ENCODE measurements at regions of chr10 and their contacts with region 1.

Region 1: DNA sequence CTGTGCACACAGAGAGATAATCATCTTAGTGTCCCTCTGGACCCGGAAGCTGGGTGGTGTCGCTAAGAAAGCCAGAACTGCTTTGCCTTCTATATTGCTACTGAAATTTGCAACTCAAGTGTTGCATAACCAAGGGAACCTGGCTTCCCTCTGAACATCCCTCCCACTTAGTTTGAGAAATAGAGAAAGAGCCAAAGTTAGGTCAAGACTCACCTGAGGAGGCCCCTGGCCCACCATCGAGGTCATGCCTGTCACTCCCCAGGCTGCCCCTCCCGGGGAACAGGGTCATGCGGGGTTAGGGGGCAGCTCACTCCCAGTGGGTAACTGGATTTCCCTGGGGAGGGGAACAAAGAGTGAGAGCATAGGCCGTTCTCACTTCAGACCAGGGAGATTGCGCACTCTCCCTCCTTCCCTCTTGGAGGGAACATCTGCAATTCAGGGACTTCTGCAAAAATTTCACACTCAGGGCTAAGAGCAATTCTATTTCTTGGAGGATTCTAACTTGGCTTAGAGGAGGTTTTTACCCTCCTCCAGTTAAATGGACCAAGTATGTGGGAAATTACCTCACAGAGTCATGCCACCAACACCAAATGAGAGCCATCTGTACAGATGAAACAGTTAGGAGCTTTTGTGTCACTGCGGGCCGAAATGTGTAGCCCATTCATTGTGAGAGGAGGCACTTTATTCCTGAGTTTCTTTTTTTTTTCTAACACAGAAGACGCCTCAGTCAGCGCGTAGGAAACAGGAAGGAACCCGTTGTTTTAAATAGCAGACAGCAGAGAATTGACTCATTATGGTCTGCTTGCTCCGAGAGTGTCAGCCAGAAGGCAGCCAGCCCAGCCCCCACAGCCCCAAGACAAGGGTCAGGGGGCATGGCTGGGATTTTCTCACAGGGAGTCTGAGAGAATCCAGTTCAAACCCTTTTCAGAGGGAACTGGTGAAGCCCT is 221.3 kb downstream of the ARHGAP12 start:
- DNase-seq: peak in 3 of 4 donors; percentile 26 to 70 (median 35)
- ATAC-seq: peak; percentile 56
- H3K4me3 ChIP-seq: no peak overlapping the region
- H3K27ac ChIP-seq: peak overlapping the region in 3 of 4 donors; percentile 14 to 73 (median 56)
- H3K4me1 ChIP-seq: peaks cover 6% of the 10 kb centered on the region
- H3K27me3 ChIP-seq: no peaks in the 10 kb centered on the region
- CTCF ChIP-seq: no peak
- POLR2A ChIP-seq: peak in 1 of 3 donors; percentile 20

Region 2: DNA sequence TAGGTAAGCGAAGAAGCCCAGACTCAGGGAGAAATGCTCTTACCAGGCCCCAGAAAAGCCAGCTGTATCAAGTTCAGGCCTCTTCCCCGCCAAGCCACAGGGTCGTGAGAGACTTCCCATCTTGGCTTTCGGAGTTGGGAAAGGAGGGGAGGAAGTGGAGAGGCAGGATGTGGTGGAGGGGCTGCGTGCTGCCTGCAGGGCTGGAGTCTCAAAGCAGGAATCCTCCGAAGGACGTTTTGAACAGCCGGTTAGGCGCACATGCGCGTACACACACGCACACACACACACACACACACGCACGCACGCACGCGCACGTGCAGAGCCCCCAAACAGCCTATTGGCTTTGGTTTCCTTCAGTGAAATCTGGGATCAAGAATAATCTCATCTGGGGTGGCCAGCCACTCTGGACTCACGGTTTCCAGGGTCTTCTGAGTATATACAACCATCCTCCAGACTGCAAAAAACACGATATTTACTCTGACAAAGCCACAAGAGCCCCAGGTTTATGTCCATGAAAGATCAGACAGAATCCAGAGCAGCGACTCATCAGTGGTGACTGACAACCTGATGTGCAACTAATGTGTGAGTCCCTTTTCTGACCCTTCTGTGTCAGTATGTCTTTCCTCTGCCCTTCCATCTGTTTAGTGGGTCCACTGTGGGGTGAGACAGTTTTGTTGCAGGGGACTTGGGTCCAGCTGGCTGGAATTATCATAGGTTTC is 560.7 kb before region 1 on chr10:
- intact Hi-C with region 1: no loop called
- DNase-seq: peak in 1 of 4 donors; percentile 46
- ATAC-seq: peak; percentile 27
- H3K4me3 ChIP-seq: no peak overlapping the region
- H3K27ac ChIP-seq: peak overlapping the region in 1 of 4 donors; percentile 25
- H3K4me1 ChIP-seq: no peaks in the 10 kb centered on the region
- H3K27me3 ChIP-seq: no peaks in the 10 kb centered on the region
- CTCF ChIP-seq: no peak
- POLR2A ChIP-seq: no peak

Region 3: DNA sequence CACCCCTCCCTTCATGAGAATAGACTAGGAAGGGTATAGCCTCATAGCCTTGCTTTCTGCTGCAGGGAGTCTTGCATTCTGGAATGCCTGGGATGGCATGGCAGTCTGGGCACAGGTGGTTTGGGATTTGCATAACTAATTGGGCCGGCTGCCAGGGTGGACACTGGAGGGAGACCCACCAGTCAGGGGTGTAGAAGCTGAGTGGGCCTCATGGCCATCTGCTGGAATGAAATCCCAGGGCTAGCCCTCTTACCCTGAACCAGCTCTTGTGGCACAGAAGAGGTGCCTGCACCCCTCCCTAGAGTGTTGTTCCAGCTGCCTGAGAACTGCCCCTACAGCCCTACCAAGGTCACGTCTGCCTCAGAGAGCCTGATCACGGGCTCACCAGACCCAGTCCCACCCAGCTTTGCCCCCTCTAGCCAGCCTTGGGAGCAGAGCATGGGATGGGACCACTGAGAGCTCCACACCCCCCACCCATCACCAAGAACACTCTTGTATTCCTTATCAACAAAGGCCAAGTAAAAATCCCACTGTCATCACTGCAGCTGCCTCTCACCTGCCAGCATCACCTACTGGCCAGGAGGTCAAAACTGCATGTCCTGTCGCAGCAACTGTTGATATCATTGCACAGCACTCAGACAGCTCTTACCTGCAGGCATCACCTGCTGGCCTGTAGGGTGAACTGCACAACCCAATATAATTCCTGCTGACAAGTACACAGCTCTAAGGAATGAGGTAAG is 239.4 kb before region 1 on chr10:
- intact Hi-C with region 1: no loop called
- DNase-seq: peak; percentile 11 to 27 (median 18)
- ATAC-seq: peak; percentile 48
- H3K4me3 ChIP-seq: no peak overlapping the region
- H3K27ac ChIP-seq: no peak overlapping the region
- H3K4me1 ChIP-seq: no peaks in the 10 kb centered on the region
- H3K27me3 ChIP-seq: no peaks in the 10 kb centered on the region
- CTCF ChIP-seq: peak in 6 of 7 experiments; percentile 19 to 61 (median 34)
- POLR2A ChIP-seq: no peak

Region 4: DNA sequence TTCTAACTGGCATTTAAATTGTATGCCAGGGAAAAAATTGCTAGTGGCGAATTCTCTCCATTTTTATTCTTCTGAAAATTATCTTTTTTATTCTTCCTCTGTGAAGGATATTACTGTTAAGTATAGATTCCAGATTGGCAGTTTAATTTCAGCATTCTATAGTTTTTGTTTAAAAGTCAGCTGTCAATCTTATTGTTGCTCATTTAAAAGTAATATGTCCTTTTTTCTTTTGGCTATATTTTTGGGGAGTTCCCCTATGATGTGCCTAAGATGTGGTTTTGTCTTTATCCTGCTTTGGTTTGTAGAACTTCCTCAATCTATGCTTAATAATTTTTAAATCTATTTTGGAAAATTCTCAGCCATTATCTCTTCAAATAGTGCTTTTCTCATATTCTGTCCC is 85.4 kb after region 1 on chr10:
- intact Hi-C with region 1: loop called (anchors 10 kb)
- DNase-seq: no peak
- ATAC-seq: no peak
- H3K4me3 ChIP-seq: no peak overlapping the region
- H3K27ac ChIP-seq: no peak overlapping the region
- H3K4me1 ChIP-seq: no peaks in the 10 kb centered on the region
- H3K27me3 ChIP-seq: no peaks in the 10 kb centered on the region
- CTCF ChIP-seq: no peak
- POLR2A ChIP-seq: no peak

Measured in body of pancreas (tissue), 4 donors.